Activated T-helper 2 cell treated with anti-CD3 and anti-CD28 coated beads, Interferon-gamma antibody, Interleukin-2, Interleukin-4, amounts not matched to agents 10 μg/mL and 5 μg/mL and 100 μg/mL, durations not matched to agents 14 hours and 24 hours and 36 hours (primary cell): ENCODE measurements at regions of chr11 and their contacts with region 1.

Region 1: GRCh38 chr11:1837171-1838076 is 1.4 kb upstream of the TNNI2 start:
- DNase-seq: peak; percentile 67
- H3K4me3 Mint-ChIP-seq: no peak overlapping the region
- H3K27ac Mint-ChIP-seq: no peak overlapping the region
- H3K4me1 Mint-ChIP-seq: peaks cover 7% of the 10 kb centered on the region
- H3K27me3 Mint-ChIP-seq: peaks cover 2% of the 10 kb centered on the region

Region 2: GRCh38 chr11:1882519-1883238 is 45.3 kb after region 1 on chr11:
- intact Hi-C with region 1: loop called (anchors 10 kb)
- DNase-seq: peak; percentile 66
- H3K4me3 Mint-ChIP-seq: no peak overlapping the region
- H3K27ac Mint-ChIP-seq: no peak overlapping the region
- H3K4me1 Mint-ChIP-seq: peaks cover 8% of the 10 kb centered on the region
- H3K27me3 Mint-ChIP-seq: no peaks in the 10 kb centered on the region

Region 3: DNA sequence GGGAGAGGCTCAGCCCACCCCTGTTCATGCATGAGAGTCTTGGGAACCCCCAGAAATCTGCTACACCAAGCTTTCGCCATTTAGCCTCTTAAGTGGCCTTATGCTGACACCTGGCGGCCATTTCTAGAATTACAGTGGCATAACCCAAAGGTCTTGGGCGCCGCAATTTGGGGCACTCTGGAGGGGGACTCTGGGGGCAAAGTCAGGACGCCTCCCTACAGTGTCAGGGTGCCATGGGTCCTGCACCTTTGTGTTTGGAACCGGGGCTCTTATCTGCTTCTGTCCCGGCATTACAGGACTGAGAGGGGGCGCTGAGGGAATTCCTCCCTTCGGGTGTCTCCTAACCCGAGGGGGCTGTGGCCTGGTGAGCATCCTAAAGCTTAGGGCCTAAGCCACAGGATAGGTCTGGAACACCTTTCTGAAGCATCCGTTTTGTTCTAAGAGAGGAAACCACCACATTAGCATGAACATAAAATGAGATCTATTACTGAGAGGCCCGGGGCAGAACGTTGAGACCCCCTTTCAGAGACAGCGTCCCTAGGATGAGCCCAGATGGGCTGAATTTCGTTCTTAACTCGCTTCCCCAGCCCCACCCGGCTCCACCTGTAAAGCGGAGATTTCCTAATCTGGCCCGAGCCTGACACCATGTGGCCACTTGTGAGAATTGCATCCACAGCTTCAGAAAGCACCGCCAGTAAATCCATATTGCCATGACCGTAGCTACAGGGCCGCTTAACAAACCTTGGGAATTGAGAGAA is 314.3 kb after region 1 on chr11:
- intact Hi-C with region 1: loop called (anchors 5 kb)
- DNase-seq: peak; percentile 61
- H3K4me3 Mint-ChIP-seq: no peak overlapping the region
- H3K27ac Mint-ChIP-seq: no peak overlapping the region
- H3K4me1 Mint-ChIP-seq: peaks cover 13% of the 10 kb centered on the region
- H3K27me3 Mint-ChIP-seq: peaks cover 32% of the 10 kb centered on the region